GM12878 (cell line): ENCODE measurements at regions of chr19 and their contacts with region 1.

Region 1: GRCh38 chr19:7799640-7800355 is 30.2 kb upstream of the EVI5L start:
- DNase-seq: no peak
- ATAC-seq: peak; percentile 88
- H3K4me3 ChIP-seq: peak overlapping the region; percentile 9; the same call in 1 of the 2 replicates
- H3K27ac ChIP-seq: no peak overlapping the region
- H3K4me1 ChIP-seq: 0 out of 2 replicates have a peak, but pooled peaks cover 3% of the 10 kb centered on the region
- H3K27me3 ChIP-seq: no peaks in the 10 kb centered on the region
- CTCF ChIP-seq: peak; percentile 40 to 55 (median 49); a peak in 5 of 6 replicates
- EP300 ChIP-seq: no peak
- POLR2A ChIP-seq: no peak
- RAD21 ChIP-seq: peak; percentile 81

Region 2: DNA sequence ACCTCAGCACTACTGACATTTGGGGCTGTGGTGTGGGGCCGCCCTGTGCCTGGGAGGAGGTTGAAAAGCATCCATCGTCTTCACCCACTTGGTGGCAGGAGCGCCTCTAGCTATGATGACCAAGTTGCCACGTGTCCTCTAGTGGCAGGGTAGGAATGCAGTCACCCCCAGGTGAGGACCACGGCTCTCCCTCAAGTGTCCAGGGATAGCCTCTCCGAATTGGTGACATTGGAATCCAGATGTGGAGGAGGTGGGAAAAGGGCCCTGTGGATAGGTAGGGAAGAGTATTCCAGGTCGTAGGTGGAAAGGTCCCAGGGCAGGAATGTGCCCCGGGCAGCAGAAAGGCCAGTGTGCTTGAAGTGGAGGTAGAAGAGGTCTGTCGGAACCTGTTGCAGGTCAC is 413.5 kb before region 1 on chr19:
- CTCF ChIA-PET with region 1: no interaction called
- POLR2A ChIA-PET with region 1: no interaction called
- RAD21 ChIA-PET with region 1: interaction called, 3 read pairs
- SMC1A ChIA-PET with region 1: interaction called, 8 read pairs
- in situ Hi-C with region 1: no loop called
- intact Hi-C with region 1: loop called (anchors 10 kb)
- DNase-seq: no peak
- ATAC-seq: peak; percentile 65
- H3K4me3 ChIP-seq: no peak overlapping the region
- H3K27ac ChIP-seq: peak overlapping the region; percentile 78
- H3K4me1 ChIP-seq: peaks cover 18% of the 10 kb centered on the region
- H3K27me3 ChIP-seq: no peaks in the 10 kb centered on the region
- CTCF ChIP-seq: peak in 2 of 3 experiments; percentile 14 to 54; a peak in 2 of 6 replicates
- EP300 ChIP-seq: no peak
- POLR2A ChIP-seq: no peak
- RAD21 ChIP-seq: peak; percentile 46

Region 3: DNA sequence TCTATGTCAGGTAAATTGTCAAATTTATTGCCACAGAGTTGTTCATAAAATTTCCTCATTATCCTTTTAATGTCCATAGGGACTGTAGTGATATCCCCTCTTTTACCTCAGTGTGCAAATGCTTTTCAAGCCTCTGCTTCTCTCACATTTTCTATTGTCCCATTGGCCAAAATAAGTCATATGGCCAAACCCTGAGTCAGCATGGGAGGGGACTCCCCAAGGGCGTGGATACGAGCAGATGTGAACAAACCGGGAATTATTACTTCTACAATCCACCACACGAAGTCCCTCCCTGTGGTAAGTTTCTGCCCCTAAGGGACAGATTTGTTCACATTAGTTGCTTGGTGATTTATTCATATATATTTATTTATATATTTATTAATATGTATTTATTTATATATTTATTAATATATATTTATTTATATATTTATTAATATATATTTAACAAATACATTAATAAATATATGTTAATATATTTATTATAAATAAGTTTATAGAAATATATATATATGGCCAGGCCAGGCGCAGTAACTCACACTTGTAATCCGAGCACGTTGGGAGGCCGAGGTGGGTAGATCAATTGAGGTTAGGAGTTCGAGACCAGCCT is 224.3 kb before region 1 on chr19:
- CTCF ChIA-PET with region 1: interaction called, 11 read pairs
- POLR2A ChIA-PET with region 1: no interaction called
- RAD21 ChIA-PET with region 1: no interaction called
- SMC1A ChIA-PET with region 1: interaction called, 4 read pairs
- in situ Hi-C with region 1: no loop called
- intact Hi-C with region 1: no loop called
- DNase-seq: no peak
- ATAC-seq: peak; percentile 71
- H3K4me3 ChIP-seq: no peak overlapping the region
- H3K27ac ChIP-seq: no peak overlapping the region
- H3K4me1 ChIP-seq: no peaks in the 10 kb centered on the region
- H3K27me3 ChIP-seq: no peaks in the 10 kb centered on the region
- CTCF ChIP-seq: no peak
- EP300 ChIP-seq: no peak
- POLR2A ChIP-seq: no peak
- RAD21 ChIP-seq: no peak

Region 4: DNA sequence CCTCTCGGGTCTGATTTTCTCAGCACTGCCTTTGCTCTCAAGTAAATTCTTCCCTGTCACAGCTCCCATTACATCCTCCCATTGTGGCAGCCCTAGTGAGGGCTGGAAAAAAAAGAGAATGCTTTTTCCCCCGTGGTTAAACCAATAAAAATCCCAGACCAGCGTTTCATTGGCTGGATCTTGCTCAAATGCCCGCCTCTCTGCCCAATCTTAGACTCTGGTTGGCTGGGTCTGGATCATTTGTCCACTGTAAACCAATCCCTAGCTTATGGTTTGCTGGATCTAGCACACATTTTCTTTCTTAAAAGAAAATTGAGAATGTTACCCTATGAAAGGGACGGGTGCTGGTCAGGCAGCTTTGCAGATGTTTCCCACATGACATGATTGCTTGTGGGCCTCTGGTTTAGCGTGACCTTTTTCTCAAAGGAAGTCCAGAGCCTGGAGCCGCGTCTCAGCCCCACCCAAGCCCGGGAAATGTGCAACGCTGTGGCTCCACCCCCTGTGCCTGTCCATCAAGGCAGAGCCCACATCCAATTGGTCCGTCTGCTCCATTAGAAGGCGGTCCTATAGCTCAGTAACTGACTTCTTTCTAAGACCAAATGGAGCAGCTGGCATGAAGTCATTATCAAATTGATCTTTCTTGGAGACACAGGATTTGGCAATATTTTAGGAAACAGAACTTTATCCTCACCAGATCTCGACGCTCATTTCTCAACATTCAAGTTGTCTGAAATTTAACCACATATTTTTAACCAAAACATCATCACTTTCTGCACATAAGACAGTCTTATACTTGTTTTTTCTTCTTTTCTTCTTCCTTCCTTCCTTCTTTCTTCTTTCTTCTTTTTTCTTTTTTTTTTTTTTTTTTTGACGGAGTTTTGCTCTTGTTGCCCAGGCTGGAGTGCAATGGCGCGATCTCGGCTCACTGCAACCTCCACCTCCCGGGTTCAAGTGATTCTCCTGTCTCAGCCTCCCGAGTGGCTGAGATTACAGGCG is 125.5 kb before region 1 on chr19:
- CTCF ChIA-PET with region 1: interaction called, 20 read pairs
- POLR2A ChIA-PET with region 1: no interaction called
- RAD21 ChIA-PET with region 1: interaction called, 6 read pairs
- SMC1A ChIA-PET with region 1: interaction called, 11 read pairs
- in situ Hi-C with region 1: no loop called
- intact Hi-C with region 1: loop called (anchors 1 kb)
- DNase-seq: no peak
- ATAC-seq: peak; percentile 55
- H3K4me3 ChIP-seq: no peak overlapping the region
- H3K27ac ChIP-seq: no peak overlapping the region
- H3K4me1 ChIP-seq: peaks cover 23% of the 10 kb centered on the region
- H3K27me3 ChIP-seq: peaks cover 4 to 7% of the 10 kb centered on the region in 2 experiments; a peak in 3 of 4 replicates
- CTCF ChIP-seq: no peak
- EP300 ChIP-seq: no peak
- POLR2A ChIP-seq: no peak
- RAD21 ChIP-seq: no peak

Region 5: GRCh38 chr19:7685541-7686416 is 114.0 kb before region 1 on chr19:
- CTCF ChIA-PET with region 1: interaction called, 40 read pairs
- POLR2A ChIA-PET with region 1: interaction called, 9 read pairs
- RAD21 ChIA-PET with region 1: interaction called, 17 read pairs
- SMC1A ChIA-PET with region 1: interaction called, 14 read pairs
- in situ Hi-C with region 1: no loop called
- intact Hi-C with region 1: no loop called
- DNase-seq: no peak
- ATAC-seq: no peak; the same call in 1 of the 3 replicates
- H3K4me3 ChIP-seq: no peak overlapping the region
- H3K27ac ChIP-seq: no peak overlapping the region
- H3K4me1 ChIP-seq: peaks cover 9% of the 10 kb centered on the region; the same call in 1 of the 2 replicates
- H3K27me3 ChIP-seq: no peaks in the 10 kb centered on the region
- CTCF ChIP-seq: no peak
- EP300 ChIP-seq: no peak
- POLR2A ChIP-seq: peak; percentile 61
- RAD21 ChIP-seq: no peak

Region 6: GRCh38 chr19:7722231-7722651 is 77.6 kb before region 1 on chr19:
- CTCF ChIA-PET with region 1: interaction called, 17 read pairs
- POLR2A ChIA-PET with region 1: no interaction called
- RAD21 ChIA-PET with region 1: interaction called, 4 read pairs
- SMC1A ChIA-PET with region 1: interaction called, 5 read pairs
- in situ Hi-C with region 1: no loop called
- intact Hi-C with region 1: no loop called
- DNase-seq: peak; percentile 70
- ATAC-seq: peak; percentile 77
- H3K4me3 ChIP-seq: no peak overlapping the region
- H3K27ac ChIP-seq: 0 out of 2 replicates have a peak overlapping the region, but pooled peaks have one; percentile 9
- H3K4me1 ChIP-seq: peaks cover 16% of the 10 kb centered on the region
- H3K27me3 ChIP-seq: no peaks in the 10 kb centered on the region
- CTCF ChIP-seq: no peak
- EP300 ChIP-seq: no peak
- POLR2A ChIP-seq: no peak
- RAD21 ChIP-seq: no peak

Region 7: GRCh38 chr19:7819337-7819736 is 19.5 kb after region 1 on chr19:
- CTCF ChIA-PET with region 1: interaction called, 10 read pairs
- POLR2A ChIA-PET with region 1: no interaction called
- RAD21 ChIA-PET with region 1: no interaction called
- SMC1A ChIA-PET with region 1: interaction called, 11 read pairs
- in situ Hi-C with region 1: no loop called
- intact Hi-C with region 1: loop called (anchors 2 kb)
- DNase-seq: peak; percentile 86
- ATAC-seq: peak; percentile 82
- H3K4me3 ChIP-seq: no peak overlapping the region
- H3K27ac ChIP-seq: peak overlapping the region; percentile 41
- H3K4me1 ChIP-seq: peaks cover 24% of the 10 kb centered on the region
- H3K27me3 ChIP-seq: no peaks in the 10 kb centered on the region
- CTCF ChIP-seq: no peak
- EP300 ChIP-seq: no peak; a peak in 2 of 4 replicates
- POLR2A ChIP-seq: no peak
- RAD21 ChIP-seq: no peak